ENCODE measurements at regions of chr19 and their contacts with region 1.

Region 1: GRCh38 chr19:3132971-3133792 is 2.7 kb upstream of the GNA15 start:
- DNase-seq: peak; percentile 94 to 99 (median 98)
- H3K4me3 ChIP-seq: peak overlapping the region in 6 of 7 experiments; percentile 20 to 66 (median 51)
- H3K27ac ChIP-seq: peak overlapping the region; percentile 96
- H3K4me1 ChIP-seq: peaks cover 7 to 80% (median 65%) of the 10 kb centered on the region in 4 experiments
- H3K27me3 ChIP-seq: no peaks in the 10 kb centered on the region

Region 2: DNA sequence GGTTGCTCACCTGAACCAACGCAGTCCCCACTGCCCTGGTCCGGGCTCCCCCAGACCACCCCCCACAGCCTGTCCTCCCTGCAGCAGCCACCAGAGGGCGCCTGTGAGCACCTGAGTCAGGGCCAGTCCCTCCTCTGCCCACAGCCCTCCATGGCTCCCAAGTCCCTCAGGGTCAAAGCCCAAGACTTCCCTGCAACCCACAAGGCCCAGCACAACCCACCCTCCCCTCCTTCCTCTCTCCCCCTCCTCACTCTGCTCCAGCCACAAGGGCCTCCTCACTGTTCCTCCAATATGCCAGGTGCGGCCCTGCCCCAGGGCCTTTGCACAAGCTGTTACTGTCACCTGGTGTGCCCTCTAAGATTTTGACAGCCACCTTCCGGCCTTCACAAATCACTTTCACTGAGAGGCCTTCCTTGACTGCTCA is 13.5 kb after region 1 on chr19:
- CTCF ChIA-PET with region 1: interaction called, 158 read pairs
- POLR2A ChIA-PET with region 1: interaction called, 7 read pairs
- DNase-seq: peak; percentile 49 to 69 (median 64)
- H3K4me3 ChIP-seq: no peak overlapping the region
- H3K27ac ChIP-seq: peak overlapping the region in 1 of 2 experiments; percentile 49
- H3K4me1 ChIP-seq: peaks cover 3 to 59% (median 55%) of the 10 kb centered on the region in 4 experiments
- H3K27me3 ChIP-seq: no peaks in the 10 kb centered on the region